T-cell (primary cell): ENCODE measurements at regions of chr17 and their contacts with region 1.

Region 1: DNA sequence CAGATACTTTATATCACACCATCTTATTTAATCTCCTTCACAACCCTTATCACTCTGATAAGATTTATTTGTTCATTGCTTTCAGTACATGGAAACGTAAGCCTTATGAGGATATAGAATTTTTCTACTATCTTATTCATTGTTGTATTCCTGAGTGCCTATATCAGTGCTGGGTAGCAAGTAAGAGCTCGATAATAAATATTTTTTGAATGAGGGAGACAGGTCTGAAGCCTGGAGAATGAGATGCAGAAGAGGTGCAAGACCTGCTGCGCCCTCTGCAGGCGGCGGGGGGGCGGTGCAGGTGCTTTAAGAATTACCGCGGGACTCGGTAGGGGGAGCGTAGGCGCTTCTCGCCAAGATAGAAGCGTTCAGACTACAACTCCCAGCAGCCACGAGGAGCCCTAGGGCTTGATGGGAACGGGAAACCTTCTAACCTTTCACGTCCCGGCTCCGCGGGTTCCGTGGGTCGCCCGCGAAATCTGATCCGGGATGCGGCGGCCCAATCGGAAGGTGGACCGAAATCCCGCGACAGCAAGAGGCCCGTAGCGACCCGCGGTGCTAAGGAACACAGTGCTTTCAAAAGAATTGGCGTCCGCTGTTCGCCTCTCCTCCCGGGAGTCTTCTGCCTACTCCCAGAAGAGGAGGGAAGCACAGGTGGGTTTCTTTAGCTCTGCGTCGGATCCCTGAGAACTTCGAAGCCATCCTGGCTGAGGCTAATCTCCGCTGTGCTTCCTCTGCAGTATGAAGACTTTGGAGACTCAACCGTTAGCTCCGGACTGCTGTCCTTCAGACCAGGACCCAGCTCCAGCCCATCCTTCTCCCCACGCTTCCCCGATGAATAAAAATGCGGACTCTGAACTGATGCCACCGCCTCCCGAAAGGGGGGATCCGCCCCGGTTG is at the start of gene WRAP53:
- DNase-seq: peak; percentile 91 to 97 (median 94)
- ATAC-seq: peak; percentile 78 to 82 (median 81)
- H3K4me3 ChIP-seq: peak within 1 kb of the TSS; percentile 89 to 99
- H3K4me3 Mint-ChIP-seq: peak within 1 kb of the TSS; percentile 85 to 99 (median 96)
- H3K27ac ChIP-seq: peak within 1 kb of the TSS; percentile 98
- H3K27ac Mint-ChIP-seq: peak within 1 kb of the TSS; percentile 100
- H3K4me1 ChIP-seq: peaks cover 17 to 33% of the 10 kb centered on the region in 2 experiments
- H3K4me1 Mint-ChIP-seq: peaks cover 39 to 52% (median 48%) of the 10 kb centered on the region in 3 donors
- H3K27me3 ChIP-seq: no peaks in the 10 kb centered on the region
- H3K27me3 Mint-ChIP-seq: no peaks in the 10 kb centered on the region
- total RNA-seq, gene WRAP53: 8.0 to 14.6 (median 13.1) TPM

Region 2: GRCh38 chr17:7266784-7267183 is 421.4 kb before region 1 on chr17:
- CTCF ChIA-PET with region 1: interaction called in 1 of 2 experiments, 11 read pairs
- POLR2A ChIA-PET with region 1: no interaction called
- DNase-seq: no peak
- ATAC-seq: no peak
- H3K4me3 ChIP-seq: no peak overlapping the region
- H3K4me3 Mint-ChIP-seq: no peak overlapping the region
- H3K27ac ChIP-seq: no peak overlapping the region
- H3K27ac Mint-ChIP-seq: no peak overlapping the region
- H3K4me1 ChIP-seq: peaks cover 3 to 20% of the 10 kb centered on the region in 2 experiments
- H3K4me1 Mint-ChIP-seq: peaks cover 19 to 21% (median 20%) of the 10 kb centered on the region in 3 donors
- H3K27me3 ChIP-seq: peaks cover 0 to 55% of the 10 kb centered on the region in 2 experiments
- H3K27me3 Mint-ChIP-seq: peaks cover 3 to 30% of the 10 kb centered on the region in 2 donors

Region 3: GRCh38 chr17:7561028-7561575 is 127.1 kb before region 1 on chr17:
- CTCF ChIA-PET with region 1: interaction called, 3 to 14 read pairs
- POLR2A ChIA-PET with region 1: no interaction called
- DNase-seq: peak; percentile 48 to 87 (median 71)
- ATAC-seq: peak; percentile 62 to 72 (median 69)
- H3K4me3 ChIP-seq: peak overlapping the region; percentile 73 to 83
- H3K4me3 Mint-ChIP-seq: peak overlapping the region; percentile 87 to 92 (median 92)
- H3K27ac ChIP-seq: peak overlapping the region; percentile 91
- H3K27ac Mint-ChIP-seq: peak overlapping the region; percentile 85 to 95
- H3K4me1 ChIP-seq: peaks cover 12 to 51% of the 10 kb centered on the region in 2 experiments
- H3K4me1 Mint-ChIP-seq: peaks cover 33 to 53% (median 52%) of the 10 kb centered on the region in 3 donors
- H3K27me3 ChIP-seq: no peaks in the 10 kb centered on the region
- H3K27me3 Mint-ChIP-seq: no peaks in the 10 kb centered on the region

Region 4: DNA sequence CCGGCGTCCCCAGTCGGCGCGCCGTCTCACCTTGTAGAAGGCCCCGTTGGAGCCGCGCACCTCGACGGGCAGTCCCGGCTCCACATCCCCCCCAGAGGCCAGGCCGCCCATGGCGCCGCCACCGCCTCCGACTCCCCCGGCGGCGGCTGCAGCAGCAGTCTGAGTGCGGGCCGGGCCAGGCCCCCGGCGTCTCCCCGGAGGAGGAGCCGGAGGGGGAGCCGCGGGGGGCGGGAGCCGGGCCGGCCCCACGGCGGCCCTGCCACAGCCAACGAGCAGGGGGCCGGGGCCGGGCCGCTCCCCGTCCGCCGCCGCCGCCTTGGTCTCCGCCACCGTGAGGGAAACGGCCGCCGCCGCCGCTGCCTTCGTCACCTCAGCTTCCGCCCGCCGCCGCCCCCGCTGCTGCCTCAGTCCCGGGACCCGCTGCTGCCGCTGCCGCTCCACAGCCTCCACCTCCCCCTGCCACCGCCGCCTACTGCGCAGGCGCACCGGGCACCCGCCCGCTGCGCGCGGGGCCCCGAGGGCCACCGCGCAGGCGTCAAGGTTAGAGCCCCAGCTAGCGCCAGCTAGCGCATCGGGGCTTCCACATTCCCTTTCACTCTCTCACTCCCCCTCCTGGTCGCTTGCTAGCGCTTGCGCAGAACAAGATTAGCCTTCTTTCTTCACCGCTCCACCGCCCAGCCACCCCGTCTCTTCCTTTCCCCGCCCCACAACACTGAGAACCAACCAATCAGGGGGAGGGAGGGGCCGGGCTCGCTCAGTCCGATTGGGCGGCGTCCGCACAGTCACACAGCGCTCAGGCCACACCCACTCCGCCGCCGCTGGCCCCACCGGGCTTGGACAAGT is 73.5 kb before region 1 on chr17 and contains the start of gene FXR2:
- CTCF ChIA-PET with region 1: interaction called, 3 to 36 read pairs
- POLR2A ChIA-PET with region 1: interaction called, 3 to 4 read pairs
- DNase-seq: peak; percentile 93 to 100 (median 99)
- ATAC-seq: peak; percentile 88 to 89 (median 88)
- H3K4me3 ChIP-seq: peak within 1 kb of the TSS; percentile 77 to 78
- H3K4me3 Mint-ChIP-seq: peak within 1 kb of the TSS; percentile 87 to 91 (median 89)
- H3K27ac ChIP-seq: peak within 1 kb of the TSS; percentile 65
- H3K27ac Mint-ChIP-seq: peak within 1 kb of the TSS; percentile 93 to 97
- H3K4me1 ChIP-seq: peaks cover 12 to 31% of the 10 kb centered on the region in 2 experiments
- H3K4me1 Mint-ChIP-seq: peaks cover 37 to 41% (median 39%) of the 10 kb centered on the region in 3 donors
- H3K27me3 ChIP-seq: no peaks in the 10 kb centered on the region
- H3K27me3 Mint-ChIP-seq: no peaks in the 10 kb centered on the region
- total RNA-seq, gene FXR2: 25.4 to 44.7 (median 40.5) TPM

Region 5: DNA sequence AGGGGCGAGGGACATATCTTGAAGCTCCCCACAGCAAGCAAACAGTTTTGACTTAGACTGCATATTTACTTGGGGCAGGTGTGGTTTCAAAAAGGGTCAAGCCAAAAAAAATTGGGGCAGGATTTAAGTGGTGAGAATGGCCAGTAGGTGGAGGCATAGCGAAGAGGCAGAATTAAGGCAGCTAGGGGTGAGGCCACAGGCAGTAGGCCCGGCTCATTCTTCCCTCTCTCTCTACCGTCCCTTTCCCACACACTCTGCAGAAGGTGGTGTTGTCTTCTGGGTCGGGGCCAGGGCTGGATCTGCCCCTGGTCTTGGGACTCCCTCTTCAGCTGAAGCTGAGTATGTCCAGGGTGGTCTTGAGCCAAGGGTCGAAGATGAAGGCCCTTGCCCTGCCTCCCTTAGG is 55.7 kb before region 1 on chr17:
- CTCF ChIA-PET with region 1: interaction called, 7 to 20 read pairs
- POLR2A ChIA-PET with region 1: interaction called, 3 read pairs
- DNase-seq: peak in 4 of 35 experiments; percentile 9 to 55 (median 16)
- ATAC-seq: peak in 2 of 4 experiments; percentile 18 to 19
- H3K4me3 ChIP-seq: no peak overlapping the region
- H3K4me3 Mint-ChIP-seq: no peak overlapping the region
- H3K27ac ChIP-seq: no peak overlapping the region
- H3K27ac Mint-ChIP-seq: no peak overlapping the region
- H3K4me1 ChIP-seq: peaks cover 2 to 10% of the 10 kb centered on the region in 2 experiments
- H3K4me1 Mint-ChIP-seq: peaks cover 2 to 6% (median 5%) of the 10 kb centered on the region in 3 donors
- H3K27me3 ChIP-seq: peaks cover 0 to 4% of the 10 kb centered on the region in 2 experiments
- H3K27me3 Mint-ChIP-seq: peaks cover 0 to 2% of the 10 kb centered on the region in 2 donors

Region 6: GRCh38 chr17:7667656-7668406 is 20.3 kb before region 1 on chr17:
- CTCF ChIA-PET with region 1: interaction called in 1 of 2 experiments, 4 read pairs
- POLR2A ChIA-PET with region 1: interaction called in 1 of 2 experiments, 13 read pairs
- DNase-seq: no peak
- ATAC-seq: no peak
- H3K4me3 ChIP-seq: no peak overlapping the region
- H3K4me3 Mint-ChIP-seq: no peak overlapping the region
- H3K27ac ChIP-seq: no peak overlapping the region
- H3K27ac Mint-ChIP-seq: no peak overlapping the region
- H3K4me1 ChIP-seq: no peaks in the 10 kb centered on the region
- H3K4me1 Mint-ChIP-seq: no peaks in the 10 kb centered on the region
- H3K27me3 ChIP-seq: no peaks in the 10 kb centered on the region
- H3K27me3 Mint-ChIP-seq: no peaks in the 10 kb centered on the region

Region 7: GRCh38 chr17:7703584-7704479 is 15.7 kb after region 1 on chr17:
- CTCF ChIA-PET with region 1: no interaction called
- POLR2A ChIA-PET with region 1: no interaction called
- DNase-seq: peak in 1 of 35 experiments; percentile 33
- ATAC-seq: peak in 1 of 4 experiments; percentile 56
- H3K4me3 ChIP-seq: no peak overlapping the region
- H3K4me3 Mint-ChIP-seq: peak overlapping the region; percentile 21 to 88 (median 70)
- H3K27ac ChIP-seq: no peak overlapping the region
- H3K27ac Mint-ChIP-seq: no peak overlapping the region
- H3K4me1 ChIP-seq: peaks cover 0 to 18% of the 10 kb centered on the region in 2 experiments
- H3K4me1 Mint-ChIP-seq: peaks cover 16 to 21% (median 17%) of the 10 kb centered on the region in 3 donors
- H3K27me3 ChIP-seq: peaks cover 0 to 83% of the 10 kb centered on the region in 2 experiments
- H3K27me3 Mint-ChIP-seq: peaks cover 39 to 57% of the 10 kb centered on the region in 2 donors

Region 8: GRCh38 chr17:7745748-7746470 is 57.8 kb after region 1 on chr17:
- CTCF ChIA-PET with region 1: no interaction called
- POLR2A ChIA-PET with region 1: no interaction called
- DNase-seq: no peak
- ATAC-seq: no peak
- H3K4me3 ChIP-seq: no peak overlapping the region
- H3K4me3 Mint-ChIP-seq: no peak overlapping the region
- H3K27ac ChIP-seq: no peak overlapping the region
- H3K27ac Mint-ChIP-seq: no peak overlapping the region
- H3K4me1 ChIP-seq: no peaks in the 10 kb centered on the region
- H3K4me1 Mint-ChIP-seq: no peaks in the 10 kb centered on the region
- H3K27me3 ChIP-seq: peaks cover 0 to 32% of the 10 kb centered on the region in 2 experiments
- H3K27me3 Mint-ChIP-seq: peaks cover 9 to 13% of the 10 kb centered on the region in 2 donors